Ascending aorta (tissue), 2 donors: ENCODE measurements at regions of chrX and their contacts with region 1.

Region 1: DNA sequence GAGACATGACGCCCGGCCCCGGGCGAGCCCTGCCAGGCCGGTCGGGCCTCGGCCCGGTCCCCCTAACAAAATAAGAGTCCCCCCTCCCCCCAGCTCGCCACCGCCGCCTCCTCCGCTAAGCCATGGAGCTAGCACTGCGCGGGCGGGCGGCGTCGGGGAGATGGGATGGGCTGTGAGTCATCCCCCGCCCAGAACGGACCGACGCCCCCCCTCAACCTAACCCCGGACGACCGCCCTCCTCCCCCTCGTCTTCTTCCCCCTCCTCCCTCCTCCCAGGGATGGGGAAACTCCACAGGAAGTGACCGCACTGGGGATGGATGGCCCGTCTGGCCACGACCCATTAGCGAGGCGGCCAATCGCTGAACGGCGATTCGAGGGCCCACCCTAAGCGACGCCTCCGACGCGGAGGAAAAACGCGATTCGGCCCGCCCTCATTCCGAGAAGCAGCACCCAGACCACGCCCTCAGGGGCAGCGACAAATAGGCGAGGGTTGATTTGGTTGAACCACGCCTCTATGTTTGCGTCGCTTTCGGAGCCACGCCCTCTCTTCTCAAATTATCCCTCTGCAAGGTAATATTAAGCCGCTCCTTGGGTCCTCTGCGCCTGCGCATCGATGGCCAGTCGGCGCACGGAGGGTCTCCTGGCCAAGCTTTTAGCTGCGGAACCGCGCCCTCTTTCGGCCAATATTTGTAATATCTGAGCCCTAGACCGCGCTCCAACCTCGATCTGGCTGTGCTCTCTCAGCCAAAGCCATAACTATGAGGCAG is at the start of gene TFE3:
- DNase-seq: peak; percentile 98 to 99
- H3K4me3 ChIP-seq: peak within 1 kb of the TSS; percentile 68 to 73
- H3K27ac ChIP-seq: peak within 1 kb of the TSS; percentile 95 to 98
- H3K4me1 ChIP-seq: peaks cover 0 to 3% of the 10 kb centered on the region in 2 donors
- H3K27me3 ChIP-seq: no peaks in the 10 kb centered on the region
- CTCF ChIP-seq: peak; percentile 34 to 62 (median 36)
- total RNA-seq, gene TFE3: 141 TPM

Region 2: DNA sequence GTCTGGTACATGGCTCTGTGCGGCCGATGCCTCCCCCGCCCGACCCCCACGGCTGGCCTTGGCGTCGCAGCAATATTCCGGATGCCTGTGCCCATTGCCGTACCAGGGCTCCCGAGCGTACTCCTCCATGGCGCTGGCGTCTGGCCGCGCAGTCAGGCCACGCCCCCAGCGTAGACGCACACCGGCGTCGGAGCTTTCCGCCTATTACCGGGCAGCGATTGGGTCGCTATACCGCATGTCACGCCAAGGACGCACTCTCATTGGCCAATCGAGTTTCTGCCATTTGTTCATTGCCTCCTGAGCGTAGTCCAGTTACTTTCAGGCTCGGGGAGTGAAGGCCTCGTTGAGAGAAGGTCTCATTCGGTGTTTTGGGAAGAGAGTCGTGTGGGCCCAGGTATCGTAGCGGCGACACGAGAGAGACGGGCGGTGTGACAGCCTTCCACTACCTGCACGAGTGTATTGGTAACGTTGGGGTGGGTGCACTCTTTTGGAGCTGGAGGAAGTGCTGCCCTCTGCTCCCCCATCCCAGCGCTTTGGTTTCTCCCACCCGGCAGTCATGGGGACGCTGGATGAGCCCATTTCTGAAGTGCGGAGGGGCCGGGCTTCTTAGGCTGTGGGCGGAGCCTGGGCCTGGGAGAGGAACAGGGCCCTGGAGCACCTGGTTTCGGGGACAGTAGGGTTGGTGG is 145.6 kb before region 1 on chrX and contains the starts of genes PQBP1 and TIMM17B:
- intact Hi-C with region 1: loop called (anchors 5 kb)
- DNase-seq: peak; percentile 72 to 93
- H3K4me3 ChIP-seq: peak within 1 kb of the TSS; percentile 60 to 69
- H3K27ac ChIP-seq: peak within 1 kb of the TSS; percentile 94 to 97
- H3K4me1 ChIP-seq: peaks cover 3 to 9% of the 10 kb centered on the region in 2 donors
- H3K27me3 ChIP-seq: no peaks in the 10 kb centered on the region
- CTCF ChIP-seq: no peak
- total RNA-seq, gene PQBP1: 14.8 TPM
- total RNA-seq, gene TIMM17B: 15.3 TPM

Region 3: DNA sequence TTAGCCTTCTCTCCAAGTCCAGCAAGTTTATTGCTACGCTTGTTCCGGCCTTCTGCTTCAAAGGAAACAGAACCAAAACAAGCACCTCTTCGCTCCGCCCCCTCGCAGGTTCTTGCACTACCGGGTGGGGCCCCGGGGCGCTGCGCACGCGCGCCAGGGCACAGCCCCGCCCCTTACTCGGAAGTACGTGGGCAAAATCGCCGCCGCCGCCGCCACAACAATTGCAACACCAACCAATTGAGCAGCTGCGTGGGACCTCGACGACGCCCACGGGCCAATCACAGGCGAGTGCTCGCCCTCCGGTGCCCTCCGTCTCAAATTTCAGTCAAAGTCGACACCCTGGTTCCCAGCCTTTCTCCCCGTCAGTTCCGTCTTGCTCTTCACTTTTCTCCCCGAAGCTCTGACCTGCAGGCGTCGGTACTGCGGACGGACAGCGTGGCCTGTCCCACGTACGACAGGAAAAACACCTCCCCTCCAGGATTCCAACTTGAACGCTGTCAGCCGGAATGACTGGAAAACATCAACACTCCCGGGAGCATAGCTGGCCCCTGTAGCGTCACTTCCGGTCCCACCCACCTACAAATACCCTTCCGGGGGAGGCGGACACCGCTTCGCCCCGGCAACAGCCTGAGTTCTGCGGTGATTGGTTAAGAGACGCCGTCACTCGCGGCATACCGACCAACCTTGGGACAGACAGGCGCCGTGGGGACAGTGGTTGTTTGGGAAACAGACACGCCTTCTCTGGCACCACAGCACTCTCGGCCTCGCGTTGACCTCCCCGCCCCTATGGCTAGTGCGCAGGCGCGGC is 85.4 kb before region 1 on chrX:
- intact Hi-C with region 1: loop called (anchors 1 kb)
- DNase-seq: peak; percentile 90 to 98
- H3K4me3 ChIP-seq: peak overlapping the region; percentile 58 to 86
- H3K27ac ChIP-seq: peak overlapping the region; percentile 90 to 92
- H3K4me1 ChIP-seq: no peaks in the 10 kb centered on the region
- H3K27me3 ChIP-seq: no peaks in the 10 kb centered on the region
- CTCF ChIP-seq: no peak

Region 4: DNA sequence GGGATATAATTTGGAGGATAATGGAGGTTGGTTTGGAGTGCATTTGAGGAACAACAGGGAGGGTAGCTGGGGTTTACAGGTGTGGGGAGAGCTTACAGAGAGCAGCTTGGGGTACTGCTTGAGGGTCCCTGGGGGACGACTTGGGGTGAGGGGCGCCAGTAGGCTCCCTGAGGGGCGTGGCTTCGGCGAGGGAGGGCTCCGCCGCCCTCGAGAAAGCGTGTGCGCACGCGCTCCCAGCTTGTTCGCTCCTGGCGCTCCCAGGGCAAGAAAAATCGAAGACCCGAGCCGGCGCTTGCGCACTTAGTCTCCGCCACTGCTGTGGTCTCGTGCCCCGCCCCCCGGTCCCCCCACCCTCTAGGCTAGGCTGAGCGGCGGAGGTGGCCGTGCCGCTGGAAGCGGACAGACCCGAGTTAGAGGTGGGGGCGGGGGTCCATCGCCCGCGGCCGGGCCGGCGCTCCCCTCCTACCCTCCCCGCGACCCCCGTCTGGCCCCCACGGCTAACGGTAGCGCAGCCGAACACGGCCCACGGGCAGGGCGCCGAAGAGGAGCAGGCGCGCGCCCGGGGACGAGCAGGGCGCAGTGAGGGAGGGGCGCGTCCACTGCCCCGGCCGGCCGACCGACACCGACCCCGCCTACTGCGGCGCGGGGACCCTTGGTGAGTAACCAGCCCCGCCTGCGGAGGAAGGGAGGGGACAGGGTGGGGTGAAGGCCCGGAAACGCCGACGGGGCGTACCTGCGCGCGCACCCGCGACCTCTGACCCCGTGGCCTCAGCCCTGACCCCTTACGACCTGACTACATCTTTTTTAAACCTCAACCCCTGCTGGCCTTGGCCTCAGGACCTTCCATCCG is 10.0 kb after region 1 on chrX:
- intact Hi-C with region 1: loop called (anchors 1 kb)
- DNase-seq: peak in 1 of 2 donors; percentile 80
- H3K4me3 ChIP-seq: peak overlapping the region; percentile 68 to 72
- H3K27ac ChIP-seq: peak overlapping the region; percentile 90 to 93
- H3K4me1 ChIP-seq: no peaks in the 10 kb centered on the region
- H3K27me3 ChIP-seq: no peaks in the 10 kb centered on the region
- CTCF ChIP-seq: no peak

Region 5: GRCh38 chrX:49079489-49080428 is 36.4 kb after region 1 on chrX and contains the start of gene WDR45:
- intact Hi-C with region 1: loop called (anchors 1 kb)
- DNase-seq: peak in 1 of 2 donors; percentile 88
- H3K4me3 ChIP-seq: peak within 1 kb of the TSS; percentile 64 to 78
- H3K27ac ChIP-seq: peak within 1 kb of the TSS; percentile 92 to 95
- H3K4me1 ChIP-seq: peaks cover 0 to 2% of the 10 kb centered on the region in 2 donors
- H3K27me3 ChIP-seq: no peaks in the 10 kb centered on the region
- CTCF ChIP-seq: no peak
- total RNA-seq, gene WDR45: 169 TPM

Region 6: GRCh38 chrX:49191033-49191871 is 147.8 kb after region 1 on chrX:
- intact Hi-C with region 1: loop called (anchors 5 kb)
- DNase-seq: peak; percentile 85 to 96
- H3K4me3 ChIP-seq: peak overlapping the region; percentile 57 to 78
- H3K27ac ChIP-seq: peak overlapping the region; percentile 81
- H3K4me1 ChIP-seq: no peaks in the 10 kb centered on the region
- H3K27me3 ChIP-seq: no peaks in the 10 kb centered on the region
- CTCF ChIP-seq: no peak

Region 7: DNA sequence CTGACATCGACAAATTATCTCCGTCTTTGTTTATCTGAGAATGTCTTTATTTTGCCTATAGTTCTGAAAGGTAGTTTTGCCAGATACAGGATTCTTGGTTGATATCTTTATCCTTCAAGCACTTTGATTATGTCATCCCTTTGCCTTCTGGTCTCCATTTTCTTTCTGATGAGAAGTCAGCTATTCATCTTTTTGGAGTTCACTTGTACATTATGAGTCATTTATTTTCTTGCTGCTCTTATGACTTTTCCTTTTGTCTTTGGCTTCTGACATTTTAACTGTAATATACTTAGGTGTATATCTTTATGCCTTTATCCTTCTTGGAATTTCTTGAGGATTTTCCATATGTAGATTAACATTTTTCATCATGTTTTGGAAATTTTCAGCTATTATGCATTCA is 1719.2 kb after region 1 on chrX:
- intact Hi-C with region 1: no loop called
- DNase-seq: no peak
- H3K4me3 ChIP-seq: no peak overlapping the region
- H3K27ac ChIP-seq: no peak overlapping the region
- H3K4me1 ChIP-seq: no peaks in the 10 kb centered on the region
- H3K27me3 ChIP-seq: no peaks in the 10 kb centered on the region
- CTCF ChIP-seq: no peak